ENCODE measurements at regions of chr6 and their contacts with region 1.

Region 1: DNA sequence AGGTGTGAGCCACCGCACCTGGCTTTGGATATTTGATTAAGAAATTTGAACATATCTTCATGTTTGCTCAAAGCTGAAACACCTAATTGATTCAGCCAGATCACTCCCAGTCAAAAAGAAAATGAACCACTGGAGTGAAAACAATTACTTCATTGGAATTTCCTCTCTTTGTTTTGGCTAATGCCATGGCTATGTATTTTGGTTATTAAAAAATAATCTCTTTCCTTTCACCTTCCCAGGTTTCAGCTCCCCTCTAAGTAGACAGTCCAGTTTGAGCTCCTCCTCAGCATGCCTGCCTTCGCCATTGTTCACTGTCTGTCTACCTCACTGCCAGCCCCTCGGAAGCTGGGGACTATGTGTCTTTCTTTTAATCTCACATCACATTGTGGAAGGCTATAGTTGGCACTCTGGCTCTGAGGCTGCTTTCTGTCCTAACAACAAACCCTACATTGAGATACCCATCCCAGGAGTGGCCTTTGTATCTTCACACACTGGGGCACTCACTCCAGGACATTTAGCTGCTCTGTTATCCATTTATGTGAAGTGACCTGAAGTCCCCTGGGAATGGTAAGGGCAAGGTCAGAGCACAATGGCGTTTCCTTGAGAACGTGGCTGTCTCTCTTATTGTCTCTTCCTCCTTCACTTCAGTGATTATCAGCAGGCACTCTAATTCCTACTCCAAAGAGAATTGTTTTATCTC is 764.0 kb upstream of the CITED2 start:
- DNase-seq: no peak
- H3K4me3 ChIP-seq: no peak overlapping the region
- CTCF ChIP-seq: no peak
- POLR2A ChIP-seq: no peak

Region 2: DNA sequence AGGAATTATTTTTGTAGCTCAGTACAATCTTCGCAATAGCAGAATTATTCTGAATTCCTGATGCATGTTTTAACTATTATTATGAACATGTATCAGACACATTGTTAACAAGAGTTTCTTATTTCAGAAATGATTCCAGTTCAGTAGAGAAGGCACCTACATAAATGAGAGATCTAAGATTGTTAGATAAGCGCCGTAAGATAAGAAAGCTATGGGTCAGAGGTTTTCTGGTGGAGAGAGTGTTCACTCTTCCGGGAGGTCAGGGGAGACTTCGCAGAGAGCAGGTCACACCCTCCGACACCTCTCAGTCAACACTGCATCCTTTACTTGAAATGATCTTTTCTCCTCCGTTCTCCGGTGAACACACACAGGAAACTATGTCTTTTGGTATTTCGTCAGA is 367.0 kb before region 1 on chr6:
- intact Hi-C with region 1: loop called (anchors 5 kb)
- DNase-seq: no peak
- H3K4me3 ChIP-seq: no peak overlapping the region
- CTCF ChIP-seq: no peak
- POLR2A ChIP-seq: no peak

Region 3: DNA sequence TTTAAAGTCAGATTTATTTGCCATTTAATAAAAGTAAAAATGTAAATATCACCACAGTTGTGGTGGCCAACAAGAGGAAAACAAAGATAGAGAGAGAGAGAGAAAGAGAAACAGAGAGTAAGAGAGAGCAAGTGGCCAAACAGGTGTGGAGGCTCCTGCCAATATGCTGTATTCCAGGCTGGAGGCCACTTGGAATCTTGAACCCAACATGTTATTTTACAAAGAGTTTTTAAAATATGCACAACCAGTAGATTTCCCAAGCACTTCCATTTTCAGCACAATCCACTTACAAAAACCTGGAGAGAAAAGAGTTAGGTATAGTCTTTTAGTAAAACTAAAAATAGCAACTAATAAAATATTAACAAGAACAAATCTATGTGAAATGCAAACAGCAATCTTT is 559.1 kb after region 1 on chr6:
- intact Hi-C with region 1: no loop called
- DNase-seq: no peak
- H3K4me3 ChIP-seq: no peak overlapping the region
- CTCF ChIP-seq: no peak
- POLR2A ChIP-seq: no peak